ENCODE measurements at regions of chr11 and their contacts with region 1.

Region 1: DNA sequence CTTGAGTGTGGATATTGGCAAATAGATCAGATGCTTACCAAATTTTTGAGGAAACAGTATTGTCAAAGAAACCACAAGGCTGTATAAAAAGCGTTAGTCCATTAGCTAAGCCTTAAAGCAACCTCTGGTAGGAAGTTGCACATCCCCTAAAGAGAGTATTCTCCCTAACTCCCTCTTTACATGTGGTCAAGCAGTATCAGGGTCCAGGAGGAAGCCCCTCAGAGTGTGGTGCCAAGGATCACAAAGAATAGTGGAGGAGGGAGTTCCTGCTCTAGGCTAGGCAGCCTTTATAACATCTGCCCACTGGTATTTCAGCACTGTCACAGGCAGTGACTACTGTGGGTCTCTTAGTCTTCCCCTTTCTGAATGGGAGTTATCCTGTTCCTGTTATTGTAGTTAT is 18.8 kb upstream of the AMPD3 start:
- DNase-seq: no peak
- ATAC-seq: 0 out of 2 replicates have a peak, but pooled peaks have one; percentile 60
- H3K4me3 ChIP-seq: no peak overlapping the region
- H3K27ac ChIP-seq: no peak overlapping the region
- H3K4me1 ChIP-seq: no peaks in the 10 kb centered on the region
- H3K27me3 ChIP-seq: peaks cover 3% of the 10 kb centered on the region; the same call in 1 of the 2 replicates
- CTCF ChIP-seq: no peak

Region 2: GRCh38 chr11:9672288-9672916 is 763.8 kb before region 1 on chr11:
- CTCF ChIA-PET with region 1: no interaction called
- POLR2A ChIA-PET with region 1: no interaction called
- in situ Hi-C with region 1: no loop called
- intact Hi-C with region 1: no loop called
- DNase-seq: no peak
- ATAC-seq: no peak
- H3K4me3 ChIP-seq: no peak overlapping the region
- H3K27ac ChIP-seq: no peak overlapping the region
- H3K4me1 ChIP-seq: peaks cover 5% of the 10 kb centered on the region; the same call in 1 of the 2 replicates
- H3K27me3 ChIP-seq: no peaks in the 10 kb centered on the region
- CTCF ChIP-seq: no peak

Region 3: GRCh38 chr11:10725114-10725906 is 289.1 kb after region 1 on chr11:
- CTCF ChIA-PET with region 1: interaction called, 10 read pairs
- POLR2A ChIA-PET with region 1: no interaction called
- in situ Hi-C with region 1: no loop called
- intact Hi-C with region 1: no loop called
- DNase-seq: no peak
- ATAC-seq: no peak
- H3K4me3 ChIP-seq: no peak overlapping the region
- H3K27ac ChIP-seq: no peak overlapping the region
- H3K4me1 ChIP-seq: no peaks in the 10 kb centered on the region
- H3K27me3 ChIP-seq: no peaks in the 10 kb centered on the region
- CTCF ChIP-seq: no peak

Measured in Panc1 (cell line).